Endothelial cell of umbilical vein (primary cell): ENCODE measurements at regions of chr2 and their contacts with region 1.

Region 1: GRCh38 chr2:121530212-121530705 is 421 bp upstream of the RNU4ATAC start:
- DNase-seq: peak; percentile 87
- H3K4me3 ChIP-seq: peak overlapping the region; percentile 47 to 95 (median 65)
- H3K27ac ChIP-seq: peak overlapping the region; percentile 96
- H3K4me1 ChIP-seq: peaks cover 18% of the 10 kb centered on the region
- H3K27me3 ChIP-seq: no peaks in the 10 kb centered on the region
- CTCF ChIP-seq: no peak
- POLR2A ChIP-seq: no peak

Region 2: GRCh38 chr2:121400201-121400600 is 130.1 kb before region 1 on chr2:
- CTCF ChIA-PET with region 1: interaction called, 16 read pairs
- POLR2A ChIA-PET with region 1: interaction called, 3 read pairs
- dilution Hi-C with region 1: no loop called
- intact Hi-C with region 1: loop called (anchors 1 kb)
- DNase-seq: no peak
- H3K4me3 ChIP-seq: no peak overlapping the region
- H3K27ac ChIP-seq: no peak overlapping the region
- H3K4me1 ChIP-seq: no peaks in the 10 kb centered on the region
- H3K27me3 ChIP-seq: no peaks in the 10 kb centered on the region
- CTCF ChIP-seq: no peak
- POLR2A ChIP-seq: no peak

Region 3: DNA sequence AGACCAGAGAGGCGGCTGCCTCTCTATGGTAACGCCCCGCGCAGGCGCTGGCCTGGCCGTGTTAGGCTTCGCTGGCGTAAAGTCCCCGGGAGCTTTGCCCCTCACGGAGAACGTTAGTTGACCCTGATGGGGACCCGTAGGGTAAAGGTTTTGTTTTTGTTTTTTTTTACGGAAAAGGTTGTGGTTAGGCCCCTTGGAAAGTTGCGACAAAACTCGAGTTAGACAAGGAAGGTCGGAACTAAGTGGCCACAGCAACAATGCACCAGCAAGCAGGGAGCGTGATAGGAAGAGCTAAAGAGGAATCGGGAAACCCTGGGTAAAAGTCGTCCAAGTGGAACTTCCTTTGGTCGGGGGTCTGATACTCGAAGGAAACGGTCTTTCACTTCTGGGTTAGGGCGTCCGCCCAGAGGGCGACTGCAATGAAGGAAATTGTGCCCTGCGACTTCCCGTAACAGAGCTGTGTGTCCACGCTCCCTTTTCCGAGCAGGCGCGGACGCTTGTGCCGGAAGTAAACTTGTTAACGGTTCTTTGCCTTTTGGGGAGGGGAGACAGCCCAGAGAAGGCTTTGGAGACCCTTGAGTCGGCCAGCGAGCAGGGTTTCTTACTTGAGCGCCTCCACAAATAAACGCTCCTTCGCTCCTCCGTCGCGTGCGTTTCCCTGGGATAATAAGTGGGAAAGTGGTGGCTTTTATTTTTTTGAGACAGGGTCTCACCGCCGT is 119.5 kb after region 1 on chr2:
- CTCF ChIA-PET with region 1: interaction called, 35 read pairs
- POLR2A ChIA-PET with region 1: interaction called, 43 read pairs
- dilution Hi-C with region 1: no loop called
- intact Hi-C with region 1: loop called (anchors 1 kb)
- DNase-seq: peak; percentile 97
- H3K4me3 ChIP-seq: peak overlapping the region; percentile 74 to 84 (median 79)
- H3K27ac ChIP-seq: peak overlapping the region; percentile 83
- H3K4me1 ChIP-seq: peaks cover 29% of the 10 kb centered on the region
- H3K27me3 ChIP-seq: no peaks in the 10 kb centered on the region
- CTCF ChIP-seq: no peak
- POLR2A ChIP-seq: peak; percentile 82

Region 4: GRCh38 chr2:121699421-121700333 is 169.4 kb after region 1 on chr2:
- CTCF ChIA-PET with region 1: interaction called, 19 read pairs
- POLR2A ChIA-PET with region 1: interaction called, 8 read pairs
- dilution Hi-C with region 1: no loop called
- intact Hi-C with region 1: no loop called
- DNase-seq: peak; percentile 55
- H3K4me3 ChIP-seq: no peak overlapping the region
- H3K27ac ChIP-seq: peak overlapping the region; percentile 19
- H3K4me1 ChIP-seq: peaks cover 21% of the 10 kb centered on the region
- H3K27me3 ChIP-seq: no peaks in the 10 kb centered on the region
- CTCF ChIP-seq: no peak
- POLR2A ChIP-seq: no peak

Region 5: GRCh38 chr2:121736462-121737341 is 206.4 kb after region 1 on chr2 and contains the start of gene NIFK:
- CTCF ChIA-PET with region 1: interaction called, 23 read pairs
- POLR2A ChIA-PET with region 1: interaction called, 19 read pairs
- dilution Hi-C with region 1: no loop called
- intact Hi-C with region 1: loop called (anchors 1 kb)
- DNase-seq: peak; percentile 97
- H3K4me3 ChIP-seq: peak within 1 kb of the TSS; percentile 91 to 100 (median 99)
- H3K27ac ChIP-seq: peak within 1 kb of the TSS; percentile 59
- H3K4me1 ChIP-seq: peaks cover 9% of the 10 kb centered on the region
- H3K27me3 ChIP-seq: no peaks in the 10 kb centered on the region
- CTCF ChIP-seq: no peak
- POLR2A ChIP-seq: peak; percentile 85
- total RNA-seq, gene NIFK: 56.2 and 59.7 TPM in 2 replicates